GM18951 (cell line): ENCODE measurements at regions of chr1 and their contacts with region 1.

Region 1: DNA sequence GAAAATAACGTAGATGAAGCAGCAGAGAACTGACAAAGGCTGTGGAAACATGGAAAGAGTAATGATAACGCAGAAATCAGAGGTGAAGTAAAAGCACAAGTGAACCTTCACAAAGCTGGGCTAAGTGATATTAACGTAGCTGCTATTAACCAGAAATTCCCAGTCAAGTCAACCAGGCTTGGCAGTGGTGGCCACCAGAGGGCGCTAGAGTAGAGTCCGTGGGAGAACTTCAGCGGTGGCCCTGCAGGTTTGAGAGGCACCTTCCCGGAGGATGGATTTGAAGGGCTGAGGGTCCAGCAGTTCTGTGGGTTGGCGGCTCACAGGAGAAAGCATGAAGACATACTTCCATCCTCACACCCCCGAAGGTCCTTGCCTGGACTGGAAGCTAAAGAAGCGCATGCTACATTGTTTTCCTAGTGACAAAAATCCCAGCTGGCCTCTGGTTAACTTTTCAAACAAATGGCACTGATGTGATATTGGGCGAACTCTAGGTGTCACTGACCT is 81.7 kb upstream of the ZNF648 start:
- POLR2A ChIP-seq: no peak

Region 2: DNA sequence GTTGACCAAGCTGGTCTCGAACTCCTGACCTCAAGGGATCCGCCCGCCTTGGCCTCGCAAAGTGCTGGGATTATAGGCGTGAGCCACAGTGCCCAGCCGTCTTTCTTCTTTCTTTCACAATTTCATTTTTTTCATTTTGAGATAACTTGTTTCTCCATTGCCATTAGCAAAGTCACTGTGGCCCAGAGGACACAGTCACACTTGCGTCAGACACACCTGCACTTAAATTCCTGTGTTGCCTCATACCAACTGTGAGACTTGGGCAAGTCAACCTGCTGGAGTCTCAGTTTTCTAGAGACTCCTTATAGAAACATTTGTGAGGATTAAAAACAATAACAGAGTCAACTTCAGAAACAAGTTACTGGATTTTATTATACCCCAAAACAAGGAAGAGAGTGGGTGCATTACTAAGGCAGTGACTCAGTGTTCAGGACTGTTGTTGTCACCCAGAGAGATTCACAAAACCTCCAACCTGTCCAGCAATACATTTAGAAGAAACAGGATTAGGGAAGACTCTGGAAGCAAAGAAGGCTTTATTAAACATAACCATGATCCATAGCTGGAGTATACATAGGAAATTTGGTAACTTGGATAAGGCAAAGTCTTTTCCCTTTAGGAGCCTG is 254.7 kb after region 1 on chr1:
- in situ Hi-C with region 1: loop called (anchors 5 kb)
- POLR2A ChIP-seq: no peak